ENCODE measurements at regions of chr10 and their contacts with region 1.

Region 1: DNA sequence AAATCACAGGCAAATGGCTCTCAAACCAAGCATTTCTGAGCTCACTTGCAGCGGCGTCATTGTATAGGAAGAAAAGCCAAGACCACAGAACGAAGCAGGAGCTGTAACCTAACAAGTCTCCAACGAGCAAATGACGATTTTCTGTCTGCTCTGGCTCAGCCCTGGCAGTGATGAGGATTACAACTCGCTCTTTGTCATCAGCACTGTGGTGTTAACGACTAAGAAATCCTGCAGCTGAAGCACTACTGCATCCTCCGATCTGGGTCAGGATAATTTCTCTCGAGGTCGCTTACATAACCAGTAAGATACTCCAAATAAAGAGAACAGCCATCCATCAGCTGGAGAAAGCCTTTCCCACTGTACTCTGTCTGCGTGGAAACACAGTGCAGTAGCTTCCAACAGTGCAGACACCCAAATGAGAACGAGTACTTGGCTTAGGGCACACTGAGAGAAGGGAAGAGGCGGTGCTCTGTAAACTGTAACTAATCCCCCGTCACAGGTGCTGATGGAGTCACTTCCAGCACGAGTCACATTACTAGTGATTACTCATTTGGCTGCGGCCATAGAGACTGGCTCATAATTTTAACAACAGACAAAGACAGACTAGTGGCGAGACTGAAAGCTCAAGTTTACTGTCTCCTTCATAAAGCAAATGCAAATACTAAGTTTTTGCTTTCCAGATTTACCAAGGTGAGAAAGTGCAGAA is 135.8 kb downstream of the NRBF2 start:
- DNase-seq: peak; percentile 81
- H3K4me3 Mint-ChIP-seq: peak overlapping the region; percentile 92
- H3K27ac Mint-ChIP-seq: peak overlapping the region; percentile 94
- H3K4me1 Mint-ChIP-seq: peaks cover 25% of the 10 kb centered on the region
- H3K27me3 Mint-ChIP-seq: no peaks in the 10 kb centered on the region

Region 2: DNA sequence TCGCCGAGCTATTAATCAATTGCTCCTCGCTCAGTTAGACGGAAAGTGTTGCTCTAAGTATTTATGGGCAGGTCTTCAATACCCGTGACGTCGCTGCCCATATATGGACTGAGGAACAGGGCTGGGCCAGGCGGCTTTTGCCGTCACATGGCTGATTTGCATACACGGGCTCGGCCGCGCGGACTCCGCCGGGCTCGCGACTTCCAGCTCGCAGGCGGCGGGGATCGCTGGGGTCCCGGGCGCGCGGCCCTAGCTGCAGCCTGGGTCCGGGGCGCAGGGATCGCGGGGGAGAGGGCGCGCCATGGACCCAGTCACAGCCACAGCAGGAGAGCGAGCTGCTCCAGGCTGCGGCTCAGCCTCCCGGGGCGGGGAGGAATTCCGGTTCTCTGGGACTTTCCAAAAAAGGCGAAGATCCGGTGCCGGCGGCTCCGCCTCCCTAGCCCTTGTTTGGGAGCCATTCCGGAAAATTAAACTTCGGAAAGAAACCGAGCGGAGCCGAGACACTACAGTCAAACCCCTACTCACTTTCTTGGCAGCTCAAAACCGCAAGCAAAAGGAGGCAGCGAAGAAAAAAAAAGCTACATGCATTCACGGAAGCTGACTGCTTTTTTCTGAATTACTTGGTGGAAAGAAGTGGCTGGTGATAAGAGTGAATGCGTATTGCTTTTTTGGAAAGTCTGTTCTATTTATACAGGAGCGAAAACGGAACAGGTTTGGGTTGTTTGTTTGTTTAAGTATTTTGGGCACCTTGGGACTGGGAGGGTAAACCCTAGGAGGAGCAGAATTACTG is 452.4 kb before region 1 on chr10 and contains the start of gene EGR2:
- intact Hi-C with region 1: loop called (anchors 5 kb)
- DNase-seq: peak; percentile 94
- H3K4me3 Mint-ChIP-seq: peak within 1 kb of the TSS; percentile 97
- H3K27ac Mint-ChIP-seq: peak within 1 kb of the TSS; percentile 100
- H3K4me1 Mint-ChIP-seq: peaks cover 45% of the 10 kb centered on the region
- H3K27me3 Mint-ChIP-seq: peaks cover 22% of the 10 kb centered on the region
- total RNA-seq, gene EGR2: 126 and 137 TPM in 2 replicates

Region 3: DNA sequence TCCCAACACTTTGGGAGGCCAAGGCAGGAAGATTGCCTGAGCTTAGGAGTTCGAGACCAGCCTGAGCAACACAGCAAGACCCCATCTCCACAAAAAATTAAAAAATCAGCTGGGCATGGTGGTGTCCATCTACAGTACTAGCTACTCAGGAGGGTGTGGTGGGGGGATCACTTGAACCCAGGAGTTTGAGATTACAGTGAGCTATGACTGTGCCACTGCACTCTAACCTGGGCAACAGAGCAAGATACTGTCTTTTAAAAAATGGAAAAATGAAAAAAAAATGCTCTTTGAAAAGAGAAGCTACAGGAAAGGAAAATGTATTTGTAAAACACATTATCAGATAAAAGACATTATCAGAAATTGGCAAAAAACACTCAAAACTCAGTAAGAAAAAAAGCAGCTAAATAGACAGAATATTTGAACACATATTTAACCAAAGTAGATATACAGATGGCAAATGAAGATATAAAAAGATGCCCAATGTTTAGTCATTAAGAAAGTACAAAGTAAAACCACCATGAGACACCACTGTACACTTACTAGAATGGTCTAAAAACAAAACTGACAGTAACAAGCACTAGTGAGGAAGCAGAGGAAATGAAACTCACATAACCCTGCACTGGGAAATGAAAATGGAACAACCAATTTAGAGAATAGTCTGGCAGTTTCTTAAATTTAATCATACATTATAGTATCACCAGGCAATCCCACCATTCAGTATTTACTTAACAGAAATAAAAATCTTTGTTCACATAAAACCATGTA is 95.3 kb before region 1 on chr10:
- intact Hi-C with region 1: loop called (anchors 2 kb)
- DNase-seq: no peak
- H3K4me3 Mint-ChIP-seq: no peak overlapping the region
- H3K27ac Mint-ChIP-seq: peak overlapping the region; percentile 29
- H3K4me1 Mint-ChIP-seq: peaks cover 55% of the 10 kb centered on the region
- H3K27me3 Mint-ChIP-seq: no peaks in the 10 kb centered on the region

Region 4: DNA sequence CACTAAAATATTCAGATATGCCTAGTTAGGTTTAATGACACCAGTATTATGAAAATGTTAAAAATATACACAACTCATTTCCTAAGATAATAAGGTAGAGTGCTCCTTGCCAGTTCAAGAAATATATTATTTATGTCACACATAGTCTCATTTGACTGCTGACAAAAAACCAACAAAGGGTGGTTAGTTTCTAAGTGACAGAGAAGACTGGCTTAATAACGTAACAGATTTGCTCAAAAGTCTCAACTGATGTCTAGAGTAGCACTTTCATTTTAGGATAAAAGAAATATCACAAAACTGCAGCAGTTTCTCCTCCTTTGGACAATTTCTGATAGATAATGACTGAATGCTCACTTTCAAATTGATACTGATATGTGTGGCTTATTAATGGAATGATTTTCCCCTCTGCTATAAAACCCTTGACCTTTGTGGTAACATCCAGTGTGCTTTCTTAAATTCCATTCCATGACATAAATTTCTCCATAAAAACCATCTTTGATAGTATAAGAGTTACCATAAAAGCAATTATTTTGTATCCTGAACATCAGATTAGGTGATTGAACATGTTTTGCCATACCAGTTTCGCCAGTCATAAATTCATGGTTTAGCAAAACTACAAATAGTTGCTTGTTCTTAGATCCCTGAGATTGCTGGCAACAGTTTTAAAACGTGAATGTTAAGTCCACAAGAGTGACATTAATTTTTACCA is 41.6 kb before region 1 on chr10:
- intact Hi-C with region 1: loop called (anchors 1 kb)
- DNase-seq: no peak
- H3K4me3 Mint-ChIP-seq: peak overlapping the region; percentile 41
- H3K27ac Mint-ChIP-seq: peak overlapping the region; percentile 74
- H3K4me1 Mint-ChIP-seq: peaks cover 34% of the 10 kb centered on the region
- H3K27me3 Mint-ChIP-seq: no peaks in the 10 kb centered on the region

Region 5: DNA sequence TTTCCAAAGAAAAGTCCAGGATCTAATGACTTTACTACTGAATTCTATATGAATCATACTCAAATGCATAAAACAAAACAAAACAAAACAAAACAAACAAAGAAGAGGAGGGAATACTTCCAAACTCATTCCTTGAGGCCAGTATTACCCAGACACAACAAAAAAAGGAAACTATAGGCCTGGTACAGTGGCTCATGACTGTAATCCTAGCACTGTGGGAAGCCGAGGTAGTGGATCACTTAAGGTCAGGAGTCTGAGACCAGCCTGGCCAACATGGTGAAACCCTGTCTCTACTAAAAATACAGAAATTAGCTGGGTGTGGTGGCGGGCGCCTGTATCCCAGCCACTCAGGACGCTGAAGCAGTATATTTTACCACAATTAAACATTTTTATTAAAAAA is 21.2 kb before region 1 on chr10:
- intact Hi-C with region 1: no loop called
- DNase-seq: no peak
- H3K4me3 Mint-ChIP-seq: no peak overlapping the region
- H3K27ac Mint-ChIP-seq: no peak overlapping the region
- H3K4me1 Mint-ChIP-seq: peaks cover 30% of the 10 kb centered on the region
- H3K27me3 Mint-ChIP-seq: no peaks in the 10 kb centered on the region

Region 6: DNA sequence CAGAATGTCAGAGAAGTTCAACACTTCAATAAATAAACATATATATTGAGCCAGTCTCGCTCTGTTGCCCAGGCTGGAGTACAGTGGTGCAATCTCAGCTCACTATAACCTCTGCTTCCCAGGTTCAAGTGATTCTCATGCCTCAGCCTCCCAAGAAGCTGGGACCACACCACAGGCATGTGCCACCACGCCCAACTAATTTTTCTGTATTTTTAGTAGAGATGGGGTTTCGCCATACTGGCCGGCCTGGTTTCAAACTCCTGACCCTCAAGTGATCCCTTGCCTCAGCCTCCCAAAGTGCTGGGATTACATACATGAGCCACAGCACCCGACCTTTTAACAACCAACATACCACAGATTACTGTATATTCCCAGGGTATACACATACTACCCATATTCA is 62.6 kb after region 1 on chr10:
- intact Hi-C with region 1: no loop called
- DNase-seq: no peak
- H3K4me3 Mint-ChIP-seq: no peak overlapping the region
- H3K27ac Mint-ChIP-seq: no peak overlapping the region
- H3K4me1 Mint-ChIP-seq: no peaks in the 10 kb centered on the region
- H3K27me3 Mint-ChIP-seq: no peaks in the 10 kb centered on the region

Region 7: GRCh38 chr10:63388421-63389031 is 119.6 kb after region 1 on chr10:
- intact Hi-C with region 1: loop called (anchors 1 kb)
- DNase-seq: no peak
- H3K4me3 Mint-ChIP-seq: peak overlapping the region; percentile 61
- H3K27ac Mint-ChIP-seq: peak overlapping the region; percentile 45
- H3K4me1 Mint-ChIP-seq: peaks cover 42% of the 10 kb centered on the region
- H3K27me3 Mint-ChIP-seq: peaks cover 2% of the 10 kb centered on the region

Region 8: DNA sequence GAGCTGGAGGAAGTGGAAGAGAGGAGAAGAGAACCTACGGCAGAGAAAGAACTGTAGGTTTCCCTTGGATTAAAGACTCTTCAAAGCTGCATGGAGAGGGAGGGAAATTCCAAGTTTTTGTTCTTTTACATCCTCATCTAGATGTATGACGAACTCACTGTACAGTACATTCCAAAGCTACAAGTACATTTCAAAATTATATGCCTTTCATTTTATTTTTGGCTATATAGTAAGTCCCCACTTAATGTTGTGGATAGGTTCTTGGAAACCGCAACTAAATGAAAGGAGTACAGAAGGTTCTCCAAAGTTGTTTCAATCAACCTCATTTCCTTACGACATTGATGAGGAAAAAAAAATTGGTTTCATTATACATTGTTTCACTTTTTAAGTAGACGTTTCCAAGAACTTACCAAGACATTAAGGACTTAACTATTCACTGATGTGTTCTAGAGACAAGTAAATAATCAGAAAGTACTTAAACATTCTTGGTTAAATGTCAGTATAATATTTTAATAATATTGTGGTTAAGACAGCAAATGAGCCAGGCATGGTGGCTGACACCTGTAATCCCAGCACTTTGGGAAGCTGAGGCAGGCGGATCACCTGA is 213.0 kb after region 1 on chr10:
- intact Hi-C with region 1: no loop called
- DNase-seq: no peak
- H3K4me3 Mint-ChIP-seq: no peak overlapping the region
- H3K27ac Mint-ChIP-seq: no peak overlapping the region
- H3K4me1 Mint-ChIP-seq: peaks cover 3% of the 10 kb centered on the region
- H3K27me3 Mint-ChIP-seq: no peaks in the 10 kb centered on the region

Region 9: DNA sequence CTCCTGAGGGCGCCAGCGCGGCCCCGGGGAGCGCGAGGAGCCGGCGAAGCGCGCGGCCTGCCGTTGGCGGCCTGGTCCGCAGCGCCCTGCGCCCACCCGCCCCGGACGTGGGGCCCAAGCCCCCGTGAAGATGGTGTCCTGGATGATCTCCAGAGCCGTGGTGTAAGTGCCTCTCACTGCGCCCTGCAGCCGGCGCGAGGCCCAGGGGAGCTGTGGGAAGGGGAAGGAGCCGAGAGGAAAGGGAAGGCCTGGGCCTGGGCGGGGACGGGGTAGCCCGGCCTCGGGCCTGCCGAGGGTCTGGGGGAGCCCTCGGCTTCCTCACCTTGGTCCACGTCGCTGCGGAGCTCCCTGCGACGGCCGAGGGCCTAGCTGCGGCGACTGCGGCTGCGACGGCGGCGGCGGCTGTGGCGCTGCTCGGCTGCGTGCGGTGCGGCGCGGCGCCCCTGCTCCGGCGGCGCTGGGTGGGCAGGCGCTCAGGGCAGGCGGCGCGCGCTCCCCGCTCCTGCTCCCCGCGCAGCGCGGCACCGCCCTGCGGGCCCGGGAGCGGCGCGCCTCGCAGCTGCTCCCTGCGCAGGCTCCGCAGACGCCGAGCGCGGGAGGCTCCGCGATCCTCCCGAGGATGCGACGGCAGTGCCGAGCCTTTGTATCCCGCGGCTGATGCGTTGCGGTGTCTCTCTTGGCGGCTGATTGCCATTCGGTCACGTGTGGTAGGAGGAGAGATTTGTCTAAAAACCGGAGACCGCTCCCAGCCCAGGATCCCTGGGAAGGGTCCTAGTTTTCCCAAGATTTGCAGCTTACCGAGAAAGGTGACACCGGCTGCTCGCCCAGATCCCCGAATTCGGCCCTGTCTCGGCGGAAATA is 252.7 kb after region 1 on chr10:
- intact Hi-C with region 1: loop called (anchors 2 kb)
- DNase-seq: peak; percentile 42
- H3K4me3 Mint-ChIP-seq: peak overlapping the region; percentile 79
- H3K27ac Mint-ChIP-seq: peak overlapping the region; percentile 81
- H3K4me1 Mint-ChIP-seq: peaks cover 51% of the 10 kb centered on the region
- H3K27me3 Mint-ChIP-seq: no peaks in the 10 kb centered on the region